ENCODE measurements at regions of chr2 and their contacts with region 1.

Region 1: DNA sequence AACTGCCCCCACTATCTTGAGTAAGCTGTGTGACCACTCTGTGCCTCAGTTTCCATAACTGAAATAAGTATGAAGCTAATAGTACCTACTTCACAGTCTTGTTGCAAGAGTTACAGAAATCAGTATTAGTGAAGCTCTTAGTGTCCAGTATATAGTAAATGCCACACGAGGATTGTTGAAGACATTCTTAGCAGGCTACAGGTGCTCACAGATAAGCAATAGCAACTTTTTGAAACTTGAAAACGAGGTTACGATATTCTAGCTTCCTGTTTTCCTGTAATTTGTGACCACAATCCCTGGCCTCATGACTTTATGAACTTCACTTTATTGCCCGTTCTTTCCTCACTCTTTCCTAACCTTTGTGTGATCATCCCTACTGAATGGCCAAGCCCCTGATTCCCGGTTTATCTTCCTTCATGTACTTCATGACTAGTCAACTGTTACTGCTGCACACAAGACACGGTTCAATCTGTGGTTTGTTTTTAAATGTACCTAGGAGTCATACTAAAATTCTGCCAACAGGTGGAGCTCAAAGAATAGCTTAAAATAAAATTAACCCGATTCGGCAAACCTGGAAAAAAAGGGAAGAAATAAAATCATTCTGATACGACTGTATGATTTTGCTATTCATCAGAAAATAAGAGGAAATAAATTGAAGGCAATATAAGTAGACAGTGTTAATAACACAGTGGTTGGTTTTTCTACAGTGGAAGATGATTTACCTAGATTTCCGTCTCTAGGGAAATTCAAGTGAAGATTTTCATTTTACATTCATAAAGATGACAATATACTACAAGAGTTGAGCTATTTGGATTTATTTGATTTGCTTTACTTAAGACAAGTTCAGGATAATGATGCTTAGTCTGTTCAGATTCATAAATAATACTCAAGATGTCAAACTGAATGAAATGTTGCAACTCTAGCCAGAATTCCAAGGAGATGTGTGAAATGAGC is 38.1 kb upstream of the STAT1 start:
- DNase-seq: peak in 6 of 35 experiments; percentile 5 to 77 (median 23)
- ATAC-seq: peak; percentile 58 to 74 (median 68)
- H3K4me3 ChIP-seq: no peak overlapping the region
- H3K4me3 Mint-ChIP-seq: no peak overlapping the region
- H3K27ac ChIP-seq: peak overlapping the region; percentile 14
- H3K27ac Mint-ChIP-seq: no peak overlapping the region
- H3K4me1 ChIP-seq: peaks cover 8 to 15% of the 10 kb centered on the region in 2 experiments
- H3K4me1 Mint-ChIP-seq: peaks cover 23 to 26% (median 24%) of the 10 kb centered on the region in 3 donors
- H3K27me3 ChIP-seq: no peaks in the 10 kb centered on the region
- H3K27me3 Mint-ChIP-seq: no peaks in the 10 kb centered on the region

Region 2: DNA sequence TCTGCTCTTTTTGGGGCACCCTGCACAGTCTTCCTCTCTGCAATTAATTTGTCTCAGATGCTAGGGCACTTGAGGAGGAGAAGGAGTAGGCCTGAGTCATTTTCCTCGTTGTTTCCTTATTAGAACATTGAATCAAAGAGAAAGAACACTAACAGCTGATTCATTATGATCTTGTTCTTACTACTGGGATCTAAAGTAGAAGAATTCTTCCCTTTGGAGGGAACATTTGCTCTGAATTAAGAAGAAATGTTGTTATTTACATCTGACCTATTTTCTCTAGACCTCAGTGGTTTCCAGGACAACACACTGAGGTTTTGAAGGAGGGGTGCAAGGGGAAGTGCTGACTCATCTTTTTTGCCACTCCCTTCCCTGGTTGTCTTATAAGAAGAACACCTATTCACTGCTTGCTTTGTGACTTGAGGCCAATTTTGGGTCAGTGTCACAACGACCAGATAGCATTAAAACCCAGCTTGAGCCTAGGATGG is 13.8 kb before region 1 on chr2:
- CTCF ChIA-PET with region 1: interaction called, 14 to 17 read pairs
- POLR2A ChIA-PET with region 1: interaction called in 1 of 2 experiments, 7 read pairs
- DNase-seq: peak in 8 of 35 experiments; percentile 16 to 66 (median 26)
- ATAC-seq: peak; percentile 59 to 85 (median 74)
- H3K4me3 ChIP-seq: no peak overlapping the region
- H3K4me3 Mint-ChIP-seq: peak overlapping the region; percentile 11 to 58 (median 24)
- H3K27ac ChIP-seq: peak overlapping the region; percentile 68
- H3K27ac Mint-ChIP-seq: peak overlapping the region; percentile 89 to 94
- H3K4me1 ChIP-seq: peaks cover 0 to 24% of the 10 kb centered on the region in 2 experiments
- H3K4me1 Mint-ChIP-seq: peaks cover 28 to 42% (median 28%) of the 10 kb centered on the region in 3 donors
- H3K27me3 ChIP-seq: no peaks in the 10 kb centered on the region
- H3K27me3 Mint-ChIP-seq: no peaks in the 10 kb centered on the region

Region 3: GRCh38 chr2:191070276-191070675 is 18.2 kb after region 1 on chr2:
- CTCF ChIA-PET with region 1: interaction called, 12 to 63 read pairs
- POLR2A ChIA-PET with region 1: interaction called, 3 to 5 read pairs
- DNase-seq: no peak
- ATAC-seq: peak in 3 of 4 experiments; percentile 19 to 23 (median 22)
- H3K4me3 ChIP-seq: no peak overlapping the region
- H3K4me3 Mint-ChIP-seq: peak overlapping the region in 2 of 3 donors; percentile 21 to 47
- H3K27ac ChIP-seq: peak overlapping the region; percentile 48
- H3K27ac Mint-ChIP-seq: peak overlapping the region; percentile 92 to 93
- H3K4me1 ChIP-seq: peaks cover 16 to 29% of the 10 kb centered on the region in 2 experiments
- H3K4me1 Mint-ChIP-seq: peaks cover 50 to 69% (median 60%) of the 10 kb centered on the region in 3 donors
- H3K27me3 ChIP-seq: no peaks in the 10 kb centered on the region
- H3K27me3 Mint-ChIP-seq: no peaks in the 10 kb centered on the region

Region 4: GRCh38 chr2:191114403-191114886 is 62.3 kb after region 1 on chr2:
- CTCF ChIA-PET with region 1: interaction called, 5 to 15 read pairs
- POLR2A ChIA-PET with region 1: interaction called in 1 of 2 experiments, 4 read pairs
- DNase-seq: peak in 30 of 35 experiments; percentile 7 to 70 (median 36)
- ATAC-seq: peak; percentile 32 to 65 (median 44)
- H3K4me3 ChIP-seq: no peak overlapping the region
- H3K4me3 Mint-ChIP-seq: peak overlapping the region; percentile 38 to 49 (median 46)
- H3K27ac ChIP-seq: peak overlapping the region; percentile 96
- H3K27ac Mint-ChIP-seq: peak overlapping the region; percentile 84 to 94
- H3K4me1 ChIP-seq: peaks cover 12 to 33% of the 10 kb centered on the region in 2 experiments
- H3K4me1 Mint-ChIP-seq: peaks cover 73 to 84% (median 81%) of the 10 kb centered on the region in 3 donors
- H3K27me3 ChIP-seq: no peaks in the 10 kb centered on the region
- H3K27me3 Mint-ChIP-seq: no peaks in the 10 kb centered on the region

Region 5: DNA sequence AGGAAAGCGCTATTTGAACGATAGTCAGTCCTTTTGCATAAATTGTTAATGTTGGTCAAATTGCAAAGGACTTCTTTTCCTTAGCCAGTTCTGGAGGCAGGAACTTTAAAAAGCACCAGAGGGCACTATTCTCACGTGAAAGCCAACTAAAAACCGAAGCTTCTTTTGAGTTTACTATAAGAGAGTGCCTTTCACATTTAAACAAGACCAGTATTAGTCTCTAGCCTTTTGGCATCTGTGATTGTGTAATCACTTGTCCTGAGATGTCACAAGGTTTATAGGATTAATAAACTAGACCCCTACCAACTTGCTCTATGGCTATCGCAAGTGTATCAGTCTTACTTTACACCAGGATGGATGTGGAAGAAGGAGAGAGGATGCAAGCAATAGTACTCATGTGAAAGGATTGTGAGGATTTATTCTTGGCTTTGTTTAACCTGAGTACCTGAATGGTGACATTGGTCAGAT is 113.1 kb after region 1 on chr2:
- CTCF ChIA-PET with region 1: interaction called, 218 to 322 read pairs
- POLR2A ChIA-PET with region 1: interaction called in 1 of 2 experiments, 8 read pairs
- DNase-seq: peak in 9 of 35 experiments; percentile 5 to 72 (median 26)
- ATAC-seq: peak in 3 of 4 experiments; percentile 71 to 79 (median 71)
- H3K4me3 ChIP-seq: no peak overlapping the region
- H3K4me3 Mint-ChIP-seq: no peak overlapping the region
- H3K27ac ChIP-seq: no peak overlapping the region
- H3K27ac Mint-ChIP-seq: no peak overlapping the region
- H3K4me1 ChIP-seq: peaks cover 0 to 2% of the 10 kb centered on the region in 2 experiments
- H3K4me1 Mint-ChIP-seq: peaks cover 6 to 14% (median 9%) of the 10 kb centered on the region in 3 donors
- H3K27me3 ChIP-seq: no peaks in the 10 kb centered on the region
- H3K27me3 Mint-ChIP-seq: no peaks in the 10 kb centered on the region

Region 6: GRCh38 chr2:191521608-191522208 is 469.6 kb after region 1 on chr2:
- CTCF ChIA-PET with region 1: interaction called, 11 to 13 read pairs
- POLR2A ChIA-PET with region 1: no interaction called
- DNase-seq: peak in 1 of 35 experiments; percentile 47
- ATAC-seq: no peak
- H3K4me3 ChIP-seq: no peak overlapping the region
- H3K4me3 Mint-ChIP-seq: no peak overlapping the region
- H3K27ac ChIP-seq: no peak overlapping the region
- H3K27ac Mint-ChIP-seq: no peak overlapping the region
- H3K4me1 ChIP-seq: no peaks in the 10 kb centered on the region
- H3K4me1 Mint-ChIP-seq: no peaks in the 10 kb centered on the region
- H3K27me3 ChIP-seq: no peaks in the 10 kb centered on the region
- H3K27me3 Mint-ChIP-seq: peaks cover 5 to 9% of the 10 kb centered on the region in 2 donors